ENCODE measurements at regions of chr2 and their contacts with region 1.

Region 1: DNA sequence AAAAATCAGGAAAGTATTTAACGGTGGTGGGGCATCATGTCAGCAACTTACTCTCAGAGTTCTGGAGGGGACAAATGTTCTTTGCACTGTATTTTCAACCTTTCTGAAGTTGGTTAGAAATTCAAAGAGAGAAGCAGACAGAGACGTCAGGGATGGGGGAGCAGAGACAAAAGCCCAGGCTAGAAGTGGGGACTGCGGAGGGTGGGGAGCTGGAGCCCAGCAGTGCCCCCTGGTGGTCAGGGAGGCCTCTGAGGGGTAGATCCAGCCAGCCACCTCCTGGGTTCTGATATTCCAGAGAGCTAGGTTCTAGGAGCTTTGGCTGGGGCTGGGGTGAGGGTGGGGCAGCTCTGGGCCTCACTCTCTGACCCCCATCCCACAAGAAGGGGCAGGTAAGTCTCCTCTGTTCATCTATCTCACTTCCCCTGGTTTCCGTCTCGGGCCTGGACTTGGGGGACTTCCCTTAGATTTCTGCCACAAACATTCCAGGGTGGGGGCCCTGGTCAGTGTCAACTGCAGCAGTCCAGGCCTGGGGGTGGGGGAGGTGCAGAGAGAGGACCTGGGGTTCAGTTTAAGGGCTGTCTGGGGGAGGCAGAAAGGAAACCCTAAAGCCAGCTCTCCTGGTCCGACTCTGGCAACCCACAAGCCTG is 8.9 kb downstream of the TNS1 start:
- DNase-seq: peak; percentile 68 to 71
- H3K4me3 ChIP-seq: no peak overlapping the region
- H3K27ac ChIP-seq: peak overlapping the region in 2 of 3 donors; percentile 12 to 67
- H3K4me1 ChIP-seq: peaks cover 3 to 49% of the 10 kb centered on the region in 2 donors
- H3K27me3 ChIP-seq: no peaks in the 10 kb centered on the region
- CTCF ChIP-seq: peak; percentile 61 to 82 (median 68)
- POLR2A ChIP-seq: no peak

Region 2: GRCh38 chr2:217851191-217852020 is 142.5 kb before region 1 on chr2:
- intact Hi-C with region 1: no loop called
- DNase-seq: peak; percentile 33 to 51
- H3K4me3 ChIP-seq: no peak overlapping the region
- H3K27ac ChIP-seq: peak overlapping the region in 2 of 3 donors; percentile 44 to 46
- H3K4me1 ChIP-seq: peaks cover 36 to 48% of the 10 kb centered on the region in 2 donors
- H3K27me3 ChIP-seq: no peaks in the 10 kb centered on the region
- CTCF ChIP-seq: no peak
- POLR2A ChIP-seq: no peak

Region 3: DNA sequence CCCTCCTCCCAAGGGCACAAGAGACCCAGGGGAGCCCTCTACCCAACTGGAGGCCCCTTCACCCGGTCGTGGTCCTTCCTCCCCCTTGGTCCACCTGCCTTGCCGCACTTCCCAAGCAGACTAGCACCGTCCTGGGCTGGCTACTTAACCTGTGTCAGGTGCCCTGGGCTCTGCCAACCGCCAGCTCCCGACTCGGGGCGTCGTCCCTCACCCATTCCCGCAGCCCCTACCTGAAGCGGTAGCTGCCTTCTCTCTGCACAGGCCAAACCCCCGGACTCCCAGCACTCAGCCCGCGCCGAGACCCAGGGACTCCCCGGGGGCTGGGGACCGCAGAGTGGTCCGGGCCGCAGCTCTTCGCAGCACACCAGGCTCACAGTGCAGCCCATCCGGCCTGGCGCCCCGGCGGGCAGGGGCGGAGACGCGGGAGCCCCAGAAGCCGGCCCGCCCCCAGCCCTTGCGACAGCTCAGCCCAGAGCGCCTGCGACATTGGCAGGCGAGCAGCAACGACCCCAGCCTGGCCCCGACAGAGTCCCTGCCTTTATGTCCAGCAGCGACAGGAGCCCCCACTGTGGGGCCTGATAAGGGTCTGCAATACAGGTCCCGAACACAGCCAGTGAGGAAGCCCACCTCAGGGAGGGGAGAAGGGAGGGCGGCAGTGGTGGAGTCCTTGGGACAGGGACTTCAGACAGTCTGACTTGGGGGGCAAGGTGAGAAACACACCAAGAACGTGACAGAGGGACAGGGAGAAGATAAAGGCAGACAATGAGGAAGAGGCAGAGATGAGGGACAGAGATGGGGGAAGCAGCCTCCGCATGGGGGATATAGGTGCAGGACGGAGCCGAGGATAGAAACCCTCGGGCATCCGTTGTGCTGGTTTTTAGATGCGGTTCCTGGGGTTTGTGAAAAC is 39.9 kb after region 1 on chr2:
- intact Hi-C with region 1: loop called (anchors 5 kb)
- DNase-seq: no peak
- H3K4me3 ChIP-seq: no peak overlapping the region
- H3K27ac ChIP-seq: no peak overlapping the region
- H3K4me1 ChIP-seq: peaks cover 14 to 26% of the 10 kb centered on the region in 2 donors
- H3K27me3 ChIP-seq: no peaks in the 10 kb centered on the region
- CTCF ChIP-seq: no peak
- POLR2A ChIP-seq: no peak

Measured in thyroid gland (tissue), 4 donors.